HEK293T (cell line): ENCODE measurements at regions of chr12 and their contacts with region 1.

Region 1: GRCh38 chr12:124906606-124907261 is 7.7 kb downstream of the UBC start:
- DNase-seq: peak; percentile 77

Region 2: GRCh38 chr12:124888260-124888659 is 18.5 kb before region 1 on chr12:
- CTCF ChIA-PET with region 1: interaction called, 14 read pairs
- POLR2A ChIA-PET with region 1: no interaction called
- DNase-seq: no peak

Region 3: GRCh38 chr12:124917135-124917840 is 10.6 kb after region 1 on chr12:
- CTCF ChIA-PET with region 1: interaction called, 8 read pairs
- POLR2A ChIA-PET with region 1: interaction called, 16 read pairs
- DNase-seq: peak; percentile 80

Region 4: GRCh38 chr12:124940549-124941527 is 34.1 kb after region 1 on chr12:
- CTCF ChIA-PET with region 1: interaction called, 34 read pairs
- POLR2A ChIA-PET with region 1: interaction called, 18 read pairs
- DNase-seq: peak; percentile 67